IMR-90 (cell line): ENCODE measurements at regions of chr17 and their contacts with region 1.

Region 1: DNA sequence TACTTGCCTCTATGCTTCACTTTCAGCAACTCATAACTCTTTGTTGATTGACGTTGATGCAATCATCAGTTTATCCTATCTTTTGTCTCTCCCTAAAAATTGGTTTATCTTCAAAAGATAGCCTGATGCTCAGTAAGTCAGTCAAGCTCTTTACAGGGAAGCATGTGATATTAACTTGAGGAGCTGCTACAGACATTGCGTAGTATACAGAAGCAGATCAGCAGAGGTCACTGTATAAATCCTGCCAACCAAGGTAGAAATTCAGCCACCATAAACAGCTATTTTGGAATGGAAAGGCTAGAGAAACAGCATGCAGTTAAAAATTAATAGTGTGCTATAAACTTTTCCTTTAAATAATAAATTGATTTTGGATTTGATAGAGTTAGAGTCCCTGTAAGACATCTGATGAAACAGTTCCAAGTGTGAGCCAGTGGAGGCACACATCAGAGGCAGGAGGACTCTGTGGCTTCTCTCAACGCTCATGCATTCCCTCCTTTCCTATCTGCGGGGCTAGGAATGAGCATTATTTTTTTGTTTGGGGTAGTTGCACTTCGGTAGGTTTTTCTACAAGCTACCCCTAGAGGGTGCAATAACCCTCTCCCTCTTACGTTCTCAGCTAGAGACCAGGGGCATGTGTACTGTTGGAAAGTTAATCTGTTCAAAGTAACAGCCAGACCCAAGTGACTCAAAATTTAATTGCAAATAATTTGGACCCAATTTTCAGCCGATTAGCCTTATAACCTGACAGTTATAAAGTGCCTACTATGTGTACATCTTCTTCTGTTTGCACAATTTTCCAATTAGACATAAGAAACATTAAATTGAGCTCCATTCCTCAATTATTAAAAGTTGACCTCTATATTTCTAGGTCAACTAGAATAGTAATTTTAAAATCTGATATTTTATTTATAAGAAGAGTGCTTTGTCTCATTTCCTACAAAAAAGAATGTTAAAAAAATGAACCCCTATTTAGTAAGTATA is 647.7 kb upstream of the SOX9 start:
- DNase-seq: peak; percentile 70
- ATAC-seq: peak; percentile 95
- H3K4me3 ChIP-seq: no peak overlapping the region
- H3K27ac ChIP-seq: no peak overlapping the region
- H3K4me1 ChIP-seq: no peaks in the 10 kb centered on the region
- H3K27me3 ChIP-seq: no peaks in the 10 kb centered on the region
- CTCF ChIP-seq: peak; percentile 80
- POLR2A ChIP-seq: no peak
- RAD21 ChIP-seq: peak; percentile 84

Region 2: DNA sequence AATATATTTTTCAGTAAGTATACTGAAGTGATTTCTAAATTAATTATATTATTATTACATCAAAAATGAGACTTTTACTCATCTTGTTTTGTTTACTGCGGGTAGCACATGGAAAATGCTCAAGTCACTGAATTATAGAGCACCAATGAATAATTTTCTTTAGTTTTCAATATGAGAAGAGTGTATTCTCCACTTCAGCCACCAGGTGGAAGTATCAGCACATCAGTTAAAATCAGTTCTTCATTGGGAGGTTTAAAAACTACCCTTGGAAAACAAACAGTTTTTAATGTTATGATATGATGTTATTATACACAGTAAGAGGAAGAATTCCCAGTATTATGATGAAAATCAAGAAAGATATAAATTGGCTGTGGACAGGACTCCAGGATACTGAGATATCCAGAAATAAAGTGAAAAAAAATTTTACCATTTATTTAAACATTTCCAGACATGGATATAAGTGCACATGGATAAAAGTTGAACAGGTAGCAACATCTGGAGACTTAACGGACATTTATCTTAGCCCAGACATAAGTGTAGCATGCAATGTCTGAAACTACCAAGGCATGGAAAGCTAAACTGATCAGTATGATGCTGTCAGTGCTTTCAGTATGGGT is 836.5 kb before region 1 on chr17:
- CTCF ChIA-PET with region 1: no interaction called
- POLR2A ChIA-PET with region 1: no interaction called
- dilution Hi-C with region 1: no loop called
- in situ Hi-C with region 1: no loop called
- intact Hi-C with region 1: loop called (anchors 5 kb)
- DNase-seq: peak; percentile 46
- ATAC-seq: peak; percentile 70
- H3K4me3 ChIP-seq: no peak overlapping the region
- H3K27ac ChIP-seq: no peak overlapping the region
- H3K4me1 ChIP-seq: no peaks in the 10 kb centered on the region
- H3K27me3 ChIP-seq: peaks cover 7% of the 10 kb centered on the region; the same call in 1 of the 2 replicates
- CTCF ChIP-seq: peak; percentile 73
- POLR2A ChIP-seq: no peak
- RAD21 ChIP-seq: peak; percentile 79

Region 3: GRCh38 chr17:70775679-70776078 is 697.4 kb before region 1 on chr17:
- CTCF ChIA-PET with region 1: no interaction called
- POLR2A ChIA-PET with region 1: no interaction called
- dilution Hi-C with region 1: no loop called
- in situ Hi-C with region 1: loop called (anchors 25 kb)
- intact Hi-C with region 1: no loop called
- DNase-seq: no peak
- ATAC-seq: no peak
- H3K4me3 ChIP-seq: no peak overlapping the region
- H3K27ac ChIP-seq: no peak overlapping the region
- H3K4me1 ChIP-seq: no peaks in the 10 kb centered on the region
- H3K27me3 ChIP-seq: no peaks in the 10 kb centered on the region
- CTCF ChIP-seq: no peak
- POLR2A ChIP-seq: no peak
- RAD21 ChIP-seq: no peak

Region 4: DNA sequence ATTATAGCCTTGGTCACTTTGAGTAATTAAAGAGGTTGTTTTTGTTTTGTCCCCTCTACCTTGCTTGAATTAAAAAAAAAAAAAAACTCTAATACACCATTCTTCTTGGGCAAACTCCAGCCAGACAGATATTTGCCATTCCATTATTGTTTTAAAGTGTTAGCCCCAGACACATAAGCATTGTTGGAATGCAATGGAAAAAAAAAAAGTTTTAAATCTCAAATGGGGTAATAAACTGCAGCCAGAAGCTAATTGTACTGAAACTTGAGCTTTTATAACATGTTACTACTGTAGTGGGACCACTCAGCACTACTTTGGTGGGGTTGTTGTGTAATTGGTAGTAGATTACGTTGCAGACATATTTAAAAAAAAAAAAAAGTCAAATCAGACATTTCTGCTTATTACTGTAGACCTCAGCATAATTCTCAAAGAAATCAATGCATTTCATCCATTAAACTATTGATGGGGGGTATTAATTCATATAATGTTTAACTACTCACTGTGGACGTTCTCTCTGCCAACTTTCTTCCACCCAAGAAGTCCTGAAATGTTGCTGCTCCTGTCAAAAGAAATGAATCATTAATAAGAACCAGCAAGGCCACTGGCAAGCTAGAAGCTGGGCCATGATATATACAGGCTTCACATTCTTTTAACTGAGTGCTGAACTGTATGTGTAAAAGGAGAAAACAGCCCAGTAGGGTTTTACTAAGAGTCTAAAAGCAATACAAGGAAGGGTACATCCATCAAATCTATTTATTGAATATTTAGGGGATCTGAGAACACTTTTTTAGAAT is 21.2 kb after region 1 on chr17:
- CTCF ChIA-PET with region 1: interaction called, 3 read pairs
- POLR2A ChIA-PET with region 1: interaction called, 10 read pairs
- dilution Hi-C with region 1: no loop called
- in situ Hi-C with region 1: no loop called
- intact Hi-C with region 1: no loop called
- DNase-seq: peak; percentile 28
- ATAC-seq: peak; percentile 73
- H3K4me3 ChIP-seq: no peak overlapping the region
- H3K27ac ChIP-seq: no peak overlapping the region
- H3K4me1 ChIP-seq: peaks cover 2% of the 10 kb centered on the region; the same call in 1 of the 2 replicates
- H3K27me3 ChIP-seq: no peaks in the 10 kb centered on the region
- CTCF ChIP-seq: no peak
- POLR2A ChIP-seq: no peak
- RAD21 ChIP-seq: no peak

Region 5: DNA sequence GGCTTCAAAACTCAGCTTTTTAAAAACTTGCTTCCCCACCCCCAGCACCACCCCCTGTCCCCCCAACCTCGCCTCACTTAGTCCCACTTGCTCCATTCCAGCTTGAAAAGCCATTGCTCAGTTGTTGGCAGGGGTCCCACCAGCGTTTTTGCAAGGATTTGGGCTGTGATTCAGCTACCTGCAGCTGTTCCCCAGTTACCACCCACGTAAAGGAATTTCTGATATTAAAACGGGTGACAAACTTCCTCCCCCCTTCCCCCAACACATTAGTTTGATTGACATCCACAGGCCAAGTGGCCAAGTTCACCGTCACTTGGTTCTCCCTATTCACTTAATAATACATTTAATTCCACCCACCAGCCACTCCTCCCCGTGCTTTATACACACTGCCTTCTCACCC is 702.7 kb after region 1 on chr17:
- CTCF ChIA-PET with region 1: no interaction called
- POLR2A ChIA-PET with region 1: no interaction called
- dilution Hi-C with region 1: no loop called
- in situ Hi-C with region 1: no loop called
- intact Hi-C with region 1: no loop called
- DNase-seq: peak; percentile 55
- ATAC-seq: no peak
- H3K4me3 ChIP-seq: no peak overlapping the region
- H3K27ac ChIP-seq: no peak overlapping the region
- H3K4me1 ChIP-seq: no peaks in the 10 kb centered on the region; the same call in 1 of the 2 replicates
- H3K27me3 ChIP-seq: no peaks in the 10 kb centered on the region
- CTCF ChIP-seq: no peak
- POLR2A ChIP-seq: no peak
- RAD21 ChIP-seq: no peak